K562 (cell line): ENCODE measurements at regions of chr16 and their contacts with region 1.

Region 1: DNA sequence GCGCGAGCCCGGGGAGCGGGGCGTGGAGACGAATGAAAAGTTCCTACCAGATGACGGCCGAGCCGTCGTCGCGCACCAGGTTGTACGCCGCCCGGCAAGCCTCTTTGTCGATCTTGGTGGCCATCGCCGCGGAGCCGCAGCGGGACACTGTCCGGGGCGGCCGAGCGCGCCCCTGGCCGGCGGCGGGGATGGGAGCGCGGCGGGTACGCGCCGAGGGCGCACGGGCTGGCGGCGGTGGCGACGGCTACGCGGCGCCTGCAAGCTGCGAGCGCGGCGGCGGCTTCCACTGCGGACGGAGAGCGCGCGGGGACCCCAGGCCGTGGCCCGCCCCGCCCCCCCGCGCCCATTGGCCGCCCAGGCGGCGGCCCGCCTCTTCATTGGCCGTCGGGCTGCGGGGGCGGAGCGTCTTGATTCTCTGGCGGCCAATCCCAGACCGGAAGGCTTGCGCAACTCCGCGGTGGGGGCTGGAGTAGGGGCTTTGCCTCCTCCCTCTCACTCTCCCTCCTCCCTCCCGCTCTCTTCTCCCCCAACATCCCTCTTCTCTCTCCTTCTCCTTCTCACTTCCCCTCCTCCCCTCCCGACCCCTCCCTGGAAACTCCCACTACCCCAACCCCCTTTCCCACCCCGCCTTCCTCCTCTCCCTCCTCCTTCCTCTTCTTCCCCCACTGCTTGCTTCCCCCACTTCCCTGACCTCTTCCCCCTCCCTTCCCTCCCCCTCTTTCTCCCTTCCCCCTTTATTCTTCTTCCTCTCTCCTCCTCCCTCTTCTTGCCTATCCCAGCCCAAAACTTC is at the start of gene COTL1:
- DNase-seq: peak; percentile 99
- ATAC-seq: peak; percentile 88
- H3K4me3 ChIP-seq: peak within 1 kb of the TSS; percentile 57
- H3K27ac ChIP-seq: peak within 1 kb of the TSS; percentile 69
- H3K4me1 ChIP-seq: peaks cover 19 to 31% of the 10 kb centered on the region in 2 experiments; a peak in 4 of 5 replicates
- H3K27me3 ChIP-seq: no peaks in the 10 kb centered on the region
- CTCF ChIP-seq: no peak; a peak in 1 of 6 replicates
- EP300 ChIP-seq: peak; percentile 10; the same call in 1 of the 2 replicates
- POLR2A ChIP-seq: no peak
- RAD21 ChIP-seq: no peak
- polyA plus RNA-seq, gene COTL1: 27.7 to 33.4 TPM

Region 2: DNA sequence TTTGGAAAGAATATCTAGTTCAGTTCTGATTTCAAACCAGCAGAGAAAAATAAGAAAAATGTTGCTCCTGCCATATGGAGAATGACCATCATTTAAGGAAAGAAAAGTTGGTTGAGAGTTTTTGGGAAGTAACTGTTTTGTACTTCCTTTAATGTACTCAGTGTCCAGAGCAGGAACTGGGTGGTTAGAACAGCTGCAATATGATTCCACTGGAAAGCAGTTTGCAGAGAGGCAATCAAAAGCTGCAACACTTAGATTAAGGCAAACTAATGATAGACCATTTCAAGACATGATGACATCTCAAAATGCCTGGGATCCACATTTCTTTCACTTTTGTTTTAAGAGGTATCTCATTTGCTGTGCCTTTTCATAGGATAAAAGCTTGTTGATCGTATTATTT is 1123.5 kb before region 1 on chr16:
- CTCF ChIA-PET with region 1: no interaction called
- POLR2A ChIA-PET with region 1: no interaction called
- in situ Hi-C with region 1: no loop called
- intact Hi-C with region 1: no loop called
- DNase-seq: no peak
- ATAC-seq: no peak
- H3K4me3 ChIP-seq: no peak overlapping the region
- H3K27ac ChIP-seq: no peak overlapping the region
- H3K4me1 ChIP-seq: no peaks in the 10 kb centered on the region
- H3K27me3 ChIP-seq: no peaks in the 10 kb centered on the region
- CTCF ChIP-seq: no peak
- EP300 ChIP-seq: no peak
- POLR2A ChIP-seq: no peak
- RAD21 ChIP-seq: no peak

Region 3: GRCh38 chr16:84459941-84460405 is 158.0 kb before region 1 on chr16:
- CTCF ChIA-PET with region 1: no interaction called
- POLR2A ChIA-PET with region 1: no interaction called
- in situ Hi-C with region 1: no loop called
- intact Hi-C with region 1: no loop called
- DNase-seq: no peak
- ATAC-seq: peak; percentile 59
- H3K4me3 ChIP-seq: no peak overlapping the region
- H3K27ac ChIP-seq: no peak overlapping the region
- H3K4me1 ChIP-seq: peaks cover 0 to 15% of the 10 kb centered on the region in 2 experiments; a peak in 2 of 5 replicates
- H3K27me3 ChIP-seq: peaks cover 49 to 58% of the 10 kb centered on the region in 2 experiments
- CTCF ChIP-seq: no peak
- EP300 ChIP-seq: no peak
- POLR2A ChIP-seq: no peak
- RAD21 ChIP-seq: no peak

Region 4: DNA sequence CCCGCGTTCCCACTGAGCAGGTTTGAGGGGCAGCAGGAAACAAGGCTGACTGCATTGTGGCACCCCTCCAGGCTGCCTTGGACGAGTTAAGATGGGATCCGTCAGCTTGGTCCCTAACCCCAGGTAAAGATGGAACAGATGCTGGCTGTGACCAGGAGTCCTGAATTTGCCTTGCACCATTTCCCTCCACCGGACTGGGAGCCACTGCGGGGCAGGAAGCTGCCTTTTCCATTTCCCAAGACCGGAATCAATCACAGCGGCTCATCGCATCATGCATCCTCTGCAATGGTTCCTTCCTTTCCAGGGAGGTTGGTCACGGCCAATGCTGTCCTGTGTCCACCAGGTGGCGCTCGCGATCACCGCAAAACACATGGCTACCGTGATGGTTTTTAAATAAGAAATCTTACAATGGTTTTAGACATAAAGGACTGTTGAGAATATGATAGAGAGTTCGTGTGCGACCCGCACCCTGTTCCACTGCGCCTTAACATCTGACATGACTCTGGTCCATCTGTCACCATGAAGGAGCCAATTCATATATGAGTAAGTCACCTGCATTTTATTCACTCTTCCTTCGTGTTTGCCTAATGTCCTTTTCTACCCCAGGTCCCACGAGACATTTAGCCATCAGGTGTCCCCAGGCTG is 106.7 kb before region 1 on chr16:
- CTCF ChIA-PET with region 1: interaction called, 120 read pairs
- POLR2A ChIA-PET with region 1: interaction called, 4 read pairs
- in situ Hi-C with region 1: loop called (anchors 5 kb)
- intact Hi-C with region 1: loop called (anchors 1 kb)
- DNase-seq: peak; percentile 76 to 88 (median 80)
- ATAC-seq: peak; percentile 88
- H3K4me3 ChIP-seq: no peak overlapping the region
- H3K27ac ChIP-seq: no peak overlapping the region
- H3K4me1 ChIP-seq: peaks cover 7 to 16% of the 10 kb centered on the region in 2 experiments; a peak in 4 of 5 replicates
- H3K27me3 ChIP-seq: peaks cover 0 to 7% of the 10 kb centered on the region in 2 experiments; a peak in 1 of 5 replicates
- CTCF ChIP-seq: peak; percentile 89 to 99 (median 93)
- EP300 ChIP-seq: no peak
- POLR2A ChIP-seq: no peak
- RAD21 ChIP-seq: peak; percentile 97 to 99

Region 5: DNA sequence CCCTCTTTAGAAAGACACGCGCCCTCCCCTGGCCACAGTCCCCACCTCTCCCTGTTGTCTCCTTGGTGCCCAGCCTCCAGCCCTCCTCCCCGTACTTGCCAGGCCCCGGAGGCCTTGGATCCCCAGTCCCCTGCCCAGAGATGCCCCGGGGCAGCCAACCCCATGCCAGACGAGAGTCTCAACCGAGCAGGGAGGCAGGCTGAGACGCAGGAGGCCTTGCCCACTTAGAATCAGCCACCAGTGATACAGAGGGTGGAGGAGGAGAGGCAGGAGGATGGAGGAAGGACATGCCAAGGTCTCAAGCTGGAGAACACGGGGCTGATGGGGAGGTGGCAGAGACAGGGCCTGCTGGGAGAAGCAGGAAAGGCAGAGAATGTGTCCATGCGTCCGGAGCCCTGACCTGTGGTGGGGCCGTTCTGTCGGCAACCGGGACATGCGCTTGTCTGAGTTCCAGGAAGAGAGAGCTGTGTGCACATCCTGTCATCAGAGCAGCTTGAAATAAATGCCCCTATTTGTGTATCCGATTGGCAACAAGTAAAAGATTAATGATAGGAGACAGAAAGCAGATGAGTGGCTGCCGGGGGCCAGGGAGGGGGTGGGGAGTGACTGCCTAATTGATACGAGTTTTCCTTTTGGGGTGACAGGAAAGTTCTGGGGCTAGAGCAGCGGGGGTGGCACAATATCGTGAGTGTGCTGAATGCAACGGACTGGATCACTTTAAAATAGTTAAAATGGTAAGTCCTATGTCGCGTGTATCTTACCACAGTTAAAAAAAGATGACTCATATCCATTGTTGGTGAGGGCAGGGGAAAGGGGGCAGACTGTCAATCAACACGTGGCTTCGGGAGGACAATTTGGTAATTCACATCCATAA is 68.8 kb before region 1 on chr16:
- CTCF ChIA-PET with region 1: no interaction called
- POLR2A ChIA-PET with region 1: no interaction called
- in situ Hi-C with region 1: no loop called
- intact Hi-C with region 1: no loop called
- DNase-seq: no peak
- ATAC-seq: peak; percentile 29; the same call in 1 of the 3 replicates
- H3K4me3 ChIP-seq: no peak overlapping the region
- H3K27ac ChIP-seq: 0 out of 3 replicates have a peak overlapping the region, but pooled peaks have one; percentile 34
- H3K4me1 ChIP-seq: peaks cover 19 to 32% of the 10 kb centered on the region in 2 experiments
- H3K27me3 ChIP-seq: peaks cover 6 to 16% of the 10 kb centered on the region in 2 experiments; a peak in 4 of 5 replicates
- CTCF ChIP-seq: no peak
- EP300 ChIP-seq: no peak
- POLR2A ChIP-seq: no peak
- RAD21 ChIP-seq: no peak

Region 6: DNA sequence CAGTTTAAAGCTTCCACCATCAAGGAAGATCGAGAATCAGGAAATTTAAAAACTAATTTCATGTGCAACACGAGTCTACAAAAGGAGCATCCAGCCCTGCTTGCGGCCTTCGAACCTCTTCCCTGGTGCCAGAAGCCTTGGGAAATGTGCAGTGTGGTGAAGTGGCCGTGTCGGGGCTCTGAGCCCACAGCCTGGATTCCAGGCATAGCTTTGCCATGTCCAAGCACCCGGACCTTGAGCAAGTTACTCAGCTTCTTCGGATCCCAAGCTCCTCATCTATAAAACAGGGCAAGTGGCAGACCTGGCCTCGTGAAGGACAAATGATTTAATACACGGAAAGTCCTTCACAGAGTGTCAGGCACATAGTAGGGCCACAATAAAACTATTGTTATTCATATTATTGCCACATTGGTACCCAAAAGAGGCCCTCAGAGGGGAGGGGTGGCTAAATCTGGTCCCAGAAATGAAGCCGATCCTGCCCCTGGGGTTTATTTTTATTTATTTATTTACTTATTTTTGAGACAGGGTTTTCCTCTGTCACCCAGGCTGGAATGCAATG is 34.9 kb before region 1 on chr16:
- CTCF ChIA-PET with region 1: no interaction called
- POLR2A ChIA-PET with region 1: no interaction called
- in situ Hi-C with region 1: no loop called
- intact Hi-C with region 1: no loop called
- DNase-seq: no peak
- ATAC-seq: no peak
- H3K4me3 ChIP-seq: no peak overlapping the region
- H3K27ac ChIP-seq: no peak overlapping the region
- H3K4me1 ChIP-seq: peaks cover 4 to 11% of the 10 kb centered on the region in 2 experiments; a peak in 3 of 5 replicates
- H3K27me3 ChIP-seq: no peaks in the 10 kb centered on the region; a peak in 1 of 5 replicates
- CTCF ChIP-seq: no peak
- EP300 ChIP-seq: no peak
- POLR2A ChIP-seq: no peak
- RAD21 ChIP-seq: no peak

Region 7: GRCh38 chr16:84593825-84594724 is 23.9 kb before region 1 on chr16:
- CTCF ChIA-PET with region 1: no interaction called
- POLR2A ChIA-PET with region 1: interaction called, 5 read pairs
- in situ Hi-C with region 1: no loop called
- intact Hi-C with region 1: loop called (anchors 2 kb)
- DNase-seq: peak in 3 of 4 experiments; percentile 46 to 86 (median 73)
- ATAC-seq: peak; percentile 84
- H3K4me3 ChIP-seq: peak overlapping the region; percentile 0; the same call in 1 of the 2 replicates
- H3K27ac ChIP-seq: peak overlapping the region; percentile 74
- H3K4me1 ChIP-seq: peaks cover 36 to 37% of the 10 kb centered on the region in 2 experiments
- H3K27me3 ChIP-seq: no peaks in the 10 kb centered on the region
- CTCF ChIP-seq: 0 out of 6 replicates have a peak, but pooled peaks of 1 of the 3 experiments have one; percentile 3
- EP300 ChIP-seq: peak; percentile 73
- POLR2A ChIP-seq: no peak
- RAD21 ChIP-seq: peak in 1 of 2 experiments; percentile 19; a peak in 1 of 4 replicates

Region 8: DNA sequence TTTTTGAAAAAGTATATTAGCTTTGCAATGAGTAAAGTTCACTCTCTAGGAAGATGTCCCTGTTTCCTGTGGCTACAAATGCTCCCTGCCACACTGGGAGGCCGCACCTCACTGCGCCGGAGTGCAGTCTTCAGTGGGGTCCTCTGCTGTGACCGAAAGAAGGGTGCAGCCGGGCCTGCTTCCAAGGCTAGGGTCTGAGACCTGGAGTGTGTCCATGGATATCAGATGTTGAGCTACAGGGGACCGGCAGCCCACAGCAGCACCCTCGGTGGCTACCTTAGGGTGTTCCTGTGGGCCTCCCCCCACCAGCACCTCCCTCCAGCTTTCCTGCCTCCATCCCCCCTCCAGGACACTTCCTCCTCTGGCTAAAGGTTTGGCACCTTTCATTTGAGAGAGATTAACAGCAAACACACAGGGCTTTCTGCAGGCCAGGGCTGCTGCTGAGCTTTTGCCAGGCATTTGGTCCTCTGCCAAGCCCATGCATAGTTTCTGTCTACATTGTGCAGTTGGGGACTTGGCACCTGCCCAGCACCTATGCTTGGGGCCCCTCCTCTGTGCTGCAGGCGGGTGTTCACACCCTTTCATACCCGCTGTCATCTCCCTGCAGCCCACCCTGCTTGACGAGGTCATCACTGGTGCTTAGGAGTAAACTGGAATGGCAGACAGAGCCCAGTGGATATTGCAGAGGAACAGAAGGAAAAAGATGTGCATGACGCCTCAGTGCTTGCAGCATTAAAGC is 168.0 kb after region 1 on chr16:
- CTCF ChIA-PET with region 1: no interaction called
- POLR2A ChIA-PET with region 1: no interaction called
- in situ Hi-C with region 1: no loop called
- intact Hi-C with region 1: loop called (anchors 1 kb)
- DNase-seq: no peak
- ATAC-seq: no peak
- H3K4me3 ChIP-seq: no peak overlapping the region
- H3K27ac ChIP-seq: no peak overlapping the region
- H3K4me1 ChIP-seq: peaks cover 0 to 8% of the 10 kb centered on the region in 2 experiments; a peak in 1 of 5 replicates
- H3K27me3 ChIP-seq: peaks cover 0 to 12% of the 10 kb centered on the region in 2 experiments; a peak in 2 of 5 replicates
- CTCF ChIP-seq: no peak
- EP300 ChIP-seq: no peak
- POLR2A ChIP-seq: no peak
- RAD21 ChIP-seq: no peak